Natural killer cell (primary cell): ENCODE measurements at regions of chr17 and their contacts with region 1.

Region 1: GRCh38 chr17:12982224-12982623 is 35.6 kb downstream of the ELAC2 start:
- DNase-seq: peak; percentile 47 to 72
- ATAC-seq: peak; percentile 83 to 90 (median 90)
- H3K4me3 ChIP-seq: no peak overlapping the region
- H3K4me3 Mint-ChIP-seq: peak overlapping the region; percentile 74
- H3K27ac ChIP-seq: no peak overlapping the region
- H3K27ac Mint-ChIP-seq: peak overlapping the region; percentile 84 to 86
- H3K4me1 ChIP-seq: peaks cover 14% of the 10 kb centered on the region
- H3K4me1 Mint-ChIP-seq: peaks cover 9% of the 10 kb centered on the region in 2 donors
- H3K27me3 ChIP-seq: no peaks in the 10 kb centered on the region
- H3K27me3 Mint-ChIP-seq: peaks cover 6% of the 10 kb centered on the region in 2 donors
- CTCF ChIP-seq: no peak

Region 2: DNA sequence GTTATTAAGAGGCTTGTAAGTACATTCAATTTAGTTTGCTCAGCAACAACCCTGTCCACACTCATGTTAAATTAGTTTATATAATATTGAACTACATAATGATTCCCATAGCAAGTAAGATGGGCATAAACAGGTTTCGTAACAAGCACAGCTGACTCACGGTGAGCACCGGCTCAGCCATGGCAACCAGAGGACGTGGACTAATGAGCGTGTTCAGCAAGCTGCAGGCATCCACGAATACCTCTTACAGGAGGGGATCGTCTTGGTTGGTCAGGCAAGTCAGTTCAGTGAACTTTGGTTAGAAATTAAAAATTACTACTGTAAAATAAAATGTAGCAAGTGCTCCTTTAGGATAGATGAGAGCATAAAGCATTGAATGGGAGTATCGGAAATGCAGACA is 22.8 kb before region 1 on chr17:
- intact Hi-C with region 1: no loop called
- DNase-seq: no peak
- ATAC-seq: no peak
- H3K4me3 ChIP-seq: no peak overlapping the region
- H3K4me3 Mint-ChIP-seq: no peak overlapping the region
- H3K27ac ChIP-seq: no peak overlapping the region
- H3K27ac Mint-ChIP-seq: no peak overlapping the region
- H3K4me1 ChIP-seq: no peaks in the 10 kb centered on the region
- H3K4me1 Mint-ChIP-seq: no peaks in the 10 kb centered on the region
- H3K27me3 ChIP-seq: no peaks in the 10 kb centered on the region
- H3K27me3 Mint-ChIP-seq: no peaks in the 10 kb centered on the region
- CTCF ChIP-seq: no peak

Region 3: GRCh38 chr17:13017659-13018459 is 35.6 kb after region 1 on chr17 and contains the start of gene ELAC2:
- intact Hi-C with region 1: loop called (anchors 1 kb)
- DNase-seq: peak; percentile 94 to 98
- ATAC-seq: peak; percentile 98 to 100 (median 98)
- H3K4me3 ChIP-seq: peak within 1 kb of the TSS; percentile 56
- H3K4me3 Mint-ChIP-seq: peak within 1 kb of the TSS; percentile 98
- H3K27ac ChIP-seq: peak within 1 kb of the TSS; percentile 71
- H3K27ac Mint-ChIP-seq: peak within 1 kb of the TSS; percentile 93 to 96
- H3K4me1 ChIP-seq: peaks cover 18% of the 10 kb centered on the region
- H3K4me1 Mint-ChIP-seq: peaks cover 32 to 36% of the 10 kb centered on the region in 2 donors
- H3K27me3 ChIP-seq: no peaks in the 10 kb centered on the region
- H3K27me3 Mint-ChIP-seq: no peaks in the 10 kb centered on the region
- CTCF ChIP-seq: no peak
- total RNA-seq, gene ELAC2: 65.5 to 84.2 (median 83.4) TPM